CD4-positive, alpha-beta memory T cell (primary cell): ENCODE measurements at regions of chr1 and their contacts with region 1.

Region 1: DNA sequence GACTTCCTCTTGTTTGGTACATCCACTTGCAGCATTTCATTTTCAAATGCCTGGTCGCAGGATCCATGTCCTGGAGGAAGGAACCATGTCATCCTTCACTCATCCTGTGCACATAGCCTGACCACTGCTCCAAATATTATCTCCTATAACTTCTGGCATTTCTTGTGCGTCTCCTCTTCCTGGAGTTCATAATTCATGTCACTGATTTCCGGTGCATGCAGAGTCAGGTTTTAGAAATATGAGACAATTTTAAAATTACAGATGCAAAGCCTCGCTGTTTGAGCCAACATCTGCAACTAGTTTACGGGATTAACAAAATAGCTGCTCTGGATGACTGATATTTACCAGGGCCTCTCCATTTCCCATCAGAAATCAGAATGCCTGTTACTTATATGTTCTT is 268.1 kb downstream of the DNM3 start:
- DNase-seq: no peak
- H3K4me3 ChIP-seq: no peak overlapping the region
- H3K4me3 Mint-ChIP-seq: no peak overlapping the region
- H3K27ac ChIP-seq: no peak overlapping the region
- H3K27ac Mint-ChIP-seq: no peak overlapping the region
- H3K4me1 ChIP-seq: no peaks in the 10 kb centered on the region
- H3K4me1 Mint-ChIP-seq: no peaks in the 10 kb centered on the region
- H3K27me3 ChIP-seq: no peaks in the 10 kb centered on the region
- H3K27me3 Mint-ChIP-seq: peaks cover 2 to 3% of the 10 kb centered on the region in 2 donors

Region 2: GRCh38 chr1:171911506-171911905 is 197.9 kb before region 1 on chr1:
- CTCF ChIA-PET with region 1: no interaction called
- POLR2A ChIA-PET with region 1: no interaction called
- intact Hi-C with region 1: no loop called
- DNase-seq: no peak
- H3K4me3 ChIP-seq: no peak overlapping the region
- H3K4me3 Mint-ChIP-seq: no peak overlapping the region
- H3K27ac ChIP-seq: no peak overlapping the region
- H3K27ac Mint-ChIP-seq: no peak overlapping the region
- H3K4me1 ChIP-seq: no peaks in the 10 kb centered on the region
- H3K4me1 Mint-ChIP-seq: no peaks in the 10 kb centered on the region
- H3K27me3 ChIP-seq: no peaks in the 10 kb centered on the region
- H3K27me3 Mint-ChIP-seq: peaks cover 1 to 2% of the 10 kb centered on the region in 2 donors

Region 3: DNA sequence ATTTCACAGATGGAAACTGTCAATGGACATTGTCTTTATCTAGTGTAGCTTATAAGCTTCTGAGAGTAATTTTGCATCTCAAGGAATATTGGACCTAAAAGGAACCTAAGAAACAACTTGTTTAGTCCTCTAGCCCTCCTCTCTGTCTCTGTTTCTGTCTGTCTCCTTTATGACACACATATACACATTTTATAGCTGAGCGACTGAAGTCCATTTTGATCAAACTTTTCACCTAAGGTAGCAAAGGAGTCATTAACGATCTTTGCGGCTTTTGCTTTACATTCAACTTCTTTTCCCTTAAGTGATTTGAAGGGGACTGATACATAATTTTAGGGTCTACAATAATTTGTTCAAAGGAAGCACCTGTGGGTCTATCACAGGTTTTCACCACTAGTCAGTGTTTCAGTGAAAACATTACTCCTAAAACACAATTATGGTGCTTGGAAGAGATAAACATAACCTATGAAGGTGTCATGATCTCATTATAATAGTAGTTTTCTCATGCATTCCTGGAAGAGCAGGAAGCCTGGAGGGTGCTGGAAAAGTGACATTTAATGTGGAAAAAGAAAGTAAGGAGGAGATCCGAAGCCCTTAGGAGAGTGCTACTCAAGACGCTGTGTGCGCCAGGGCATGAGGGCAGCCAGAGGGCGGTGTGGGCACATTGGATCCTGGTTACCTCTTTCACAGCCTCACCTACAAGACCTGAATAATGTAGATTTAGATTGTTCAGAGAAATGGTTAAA is 19.4 kb before region 1 on chr1:
- CTCF ChIA-PET with region 1: interaction called, 10 read pairs
- POLR2A ChIA-PET with region 1: no interaction called
- intact Hi-C with region 1: no loop called
- DNase-seq: peak; percentile 42 to 57 (median 49)
- H3K4me3 ChIP-seq: no peak overlapping the region
- H3K4me3 Mint-ChIP-seq: peak overlapping the region in 1 of 8 donors; percentile 18
- H3K27ac ChIP-seq: no peak overlapping the region
- H3K27ac Mint-ChIP-seq: peak overlapping the region in 1 of 7 donors; percentile 73
- H3K4me1 ChIP-seq: no peaks in the 10 kb centered on the region
- H3K4me1 Mint-ChIP-seq: peaks cover 3 to 6% (median 4%) of the 10 kb centered on the region in 4 donors
- H3K27me3 ChIP-seq: no peaks in the 10 kb centered on the region
- H3K27me3 Mint-ChIP-seq: peaks cover 0 to 2% of the 10 kb centered on the region in 2 donors